Activated CD4-positive, alpha-beta memory T cell treated with anti-CD3 and anti-CD28 coated beads, Interleukin-2, amount 10 ng/mL, durations not matched to agents 7 days and 5 days (primary cell): ENCODE measurements at regions of chr7 and their contacts with region 1.

Region 1: GRCh38 chr7:21352540-21353387 is 75.1 kb upstream of the SP4 start:
- DNase-seq: no peak
- H3K4me3 Mint-ChIP-seq: peak overlapping the region; percentile 67
- H3K27ac Mint-ChIP-seq: peak overlapping the region; percentile 98
- H3K4me1 Mint-ChIP-seq: peaks cover 69% of the 10 kb centered on the region
- H3K27me3 Mint-ChIP-seq: no peaks in the 10 kb centered on the region

Region 2: DNA sequence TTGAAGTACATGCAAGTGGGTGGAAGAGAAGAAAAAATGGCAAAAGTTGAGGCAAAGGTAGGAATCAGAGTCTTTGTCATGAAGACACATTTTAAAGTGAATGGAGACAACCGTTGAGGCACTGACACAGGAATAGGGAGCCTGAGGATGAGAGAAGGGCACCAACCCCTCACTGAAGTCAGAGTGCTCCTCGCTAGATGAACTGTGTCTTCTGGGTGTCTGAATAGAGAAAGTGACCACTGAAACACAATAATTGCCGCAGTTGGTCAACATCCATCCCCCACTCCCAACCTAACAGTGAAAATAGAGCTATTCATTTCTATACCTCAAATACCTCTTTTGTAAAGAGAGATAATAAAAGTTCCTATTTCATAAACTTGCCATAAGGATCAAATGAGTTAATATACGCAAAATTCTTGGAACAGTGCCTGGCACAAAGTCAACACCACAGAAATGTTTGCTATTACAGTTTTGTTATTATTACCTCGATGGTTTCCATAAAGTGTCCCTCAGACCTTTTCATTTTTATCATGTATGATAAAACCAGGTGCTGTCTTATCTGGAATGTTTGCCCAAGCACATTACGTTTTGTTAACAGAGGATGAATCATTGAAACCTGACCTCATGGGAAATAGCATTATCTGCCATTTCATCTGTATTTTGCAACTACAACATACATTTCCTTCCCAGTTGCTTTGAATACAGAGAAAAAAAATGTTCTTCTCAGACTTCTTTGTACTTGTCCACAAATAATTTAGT is 13.3 kb after region 1 on chr7:
- CTCF ChIA-PET with region 1: interaction called, 5 read pairs
- POLR2A ChIA-PET with region 1: interaction called, 23 read pairs
- DNase-seq: no peak
- H3K4me3 Mint-ChIP-seq: no peak overlapping the region
- H3K27ac Mint-ChIP-seq: peak overlapping the region; percentile 71
- H3K4me1 Mint-ChIP-seq: peaks cover 65% of the 10 kb centered on the region
- H3K27me3 Mint-ChIP-seq: no peaks in the 10 kb centered on the region

Region 3: GRCh38 chr7:21383227-21384220 is 30.8 kb after region 1 on chr7:
- CTCF ChIA-PET with region 1: interaction called, 7 read pairs
- POLR2A ChIA-PET with region 1: interaction called, 28 read pairs
- DNase-seq: no peak
- H3K4me3 Mint-ChIP-seq: peak overlapping the region; percentile 53
- H3K27ac Mint-ChIP-seq: peak overlapping the region; percentile 79
- H3K4me1 Mint-ChIP-seq: peaks cover 33% of the 10 kb centered on the region
- H3K27me3 Mint-ChIP-seq: no peaks in the 10 kb centered on the region